Naive thymus-derived CD8-positive, alpha-beta T cell (primary cell): ENCODE measurements at regions of chr2 and their contacts with region 1.

Region 1: DNA sequence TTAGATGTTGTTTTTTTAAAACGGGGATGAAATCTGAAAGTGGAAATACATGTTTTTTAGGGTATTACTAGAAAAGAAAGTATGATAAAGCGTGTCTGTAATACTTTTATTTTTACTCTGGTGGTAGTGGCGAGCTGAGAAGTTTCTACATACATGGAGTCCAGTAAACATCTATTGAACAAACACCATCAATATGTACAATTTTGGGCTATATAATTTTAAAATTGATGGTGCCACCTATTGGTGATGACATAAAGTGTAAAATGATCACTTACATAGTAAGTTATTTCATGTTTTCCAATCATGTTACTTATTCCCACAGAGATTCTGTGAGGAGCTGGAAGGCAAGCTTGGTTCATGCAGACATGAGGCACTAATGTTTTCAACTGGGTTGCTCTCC is 31.5 kb upstream of the NFE2L2 start:
- DNase-seq: peak in 3 of 10 donors; percentile 35 to 44 (median 44)
- ATAC-seq: peak; percentile 69 to 77
- H3K4me3 Mint-ChIP-seq: no peak overlapping the region
- H3K27ac Mint-ChIP-seq: peak overlapping the region in 3 of 10 donors; percentile 4 to 33 (median 14)
- H3K4me1 Mint-ChIP-seq: peaks cover 5 to 15% (median 10%) of the 10 kb centered on the region in 4 donors
- H3K27me3 Mint-ChIP-seq: no peaks in the 10 kb centered on the region

Region 2: DNA sequence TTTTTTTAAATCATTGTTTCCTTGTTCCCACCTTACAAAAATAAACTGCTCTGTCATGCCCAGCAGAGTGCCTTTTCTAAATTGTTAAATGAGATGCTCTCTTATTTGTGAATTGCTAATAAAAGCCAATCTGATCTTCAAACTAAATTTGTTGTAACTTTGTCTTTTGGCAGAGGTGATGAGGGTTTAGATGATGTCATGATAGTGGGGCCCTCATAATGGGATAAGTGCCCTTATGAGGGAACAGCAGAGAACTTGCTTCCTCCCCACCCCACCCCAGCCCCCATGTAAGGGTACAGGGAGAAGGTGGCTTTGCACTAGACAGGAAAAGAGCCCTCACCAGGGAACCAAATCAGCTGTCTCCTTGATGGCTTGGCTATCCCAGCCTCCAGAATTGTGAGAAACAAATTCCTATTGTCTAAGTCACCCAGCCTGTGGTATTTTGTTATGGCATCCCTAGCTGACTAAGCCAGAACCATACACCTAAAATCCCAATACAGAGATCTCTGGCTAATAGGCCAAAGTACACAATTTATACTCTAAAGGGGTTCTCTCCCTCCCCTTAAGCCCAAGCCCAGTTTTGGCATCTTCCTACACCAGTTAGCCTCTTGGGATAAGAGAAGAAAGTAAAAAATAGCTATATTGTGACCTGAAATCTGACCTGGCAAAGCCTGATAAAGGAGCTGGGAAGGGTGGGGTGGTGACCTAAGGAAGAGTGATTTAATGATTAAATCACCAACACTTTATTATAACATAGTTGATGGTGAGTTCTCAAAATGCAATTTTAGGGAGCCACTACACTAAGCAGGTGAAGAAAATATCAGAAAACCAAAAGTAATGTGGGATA is 123.8 kb before region 1 on chr2:
- POLR2A ChIA-PET with region 1: no interaction called
- DNase-seq: no peak
- ATAC-seq: no peak
- H3K4me3 Mint-ChIP-seq: no peak overlapping the region
- H3K27ac Mint-ChIP-seq: no peak overlapping the region
- H3K4me1 Mint-ChIP-seq: peaks cover 0 to 7% (median 3%) of the 10 kb centered on the region in 4 donors
- H3K27me3 Mint-ChIP-seq: peaks cover 0 to 5% (median 3%) of the 10 kb centered on the region in 5 donors

Region 3: GRCh38 chr2:177187631-177188312 is 108.3 kb before region 1 on chr2:
- POLR2A ChIA-PET with region 1: no interaction called
- DNase-seq: no peak
- ATAC-seq: no peak
- H3K4me3 Mint-ChIP-seq: no peak overlapping the region
- H3K27ac Mint-ChIP-seq: no peak overlapping the region
- H3K4me1 Mint-ChIP-seq: peaks cover 0 to 2% (median 0%) of the 10 kb centered on the region in 4 donors
- H3K27me3 Mint-ChIP-seq: peaks cover 0 to 3% (median 0%) of the 10 kb centered on the region in 5 donors

Region 4: DNA sequence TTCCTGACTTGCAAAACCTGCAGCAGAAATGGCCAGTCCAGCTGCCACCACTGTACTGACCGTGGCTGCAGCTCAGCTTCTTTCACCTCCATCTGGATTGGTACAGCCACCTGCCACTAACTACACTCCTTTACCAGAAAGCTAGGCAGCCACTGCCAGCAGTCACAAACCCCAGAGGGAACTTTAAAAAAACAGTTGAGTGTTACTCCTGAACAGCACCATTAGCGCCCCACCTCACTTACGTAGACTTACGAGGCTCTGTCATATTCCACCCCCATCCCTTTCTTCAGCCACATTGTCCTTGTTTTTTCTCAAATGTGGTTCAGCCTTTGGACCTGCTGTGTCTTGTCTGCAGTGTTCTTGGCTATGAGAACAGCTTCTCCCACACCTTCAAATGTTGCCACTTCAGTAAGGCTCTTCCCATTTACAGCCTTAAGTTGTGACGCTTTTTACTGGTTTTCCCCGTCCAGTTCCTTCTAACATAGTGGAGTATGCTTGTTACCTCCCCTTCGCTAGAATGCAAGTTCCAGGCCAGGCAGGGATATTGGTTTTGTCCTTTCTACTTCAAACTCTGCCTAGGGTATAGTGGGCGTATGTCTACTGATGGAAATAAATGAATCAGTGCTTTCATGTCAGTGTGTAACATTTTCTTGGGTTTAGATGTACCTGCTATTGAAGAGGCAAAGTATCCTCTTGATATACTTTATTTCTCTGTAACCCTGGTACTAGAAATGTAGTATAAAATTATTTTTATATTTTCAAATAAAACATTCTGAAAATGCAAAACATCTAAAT is 66.4 kb before region 1 on chr2:
- POLR2A ChIA-PET with region 1: no interaction called
- DNase-seq: no peak
- ATAC-seq: peak in 1 of 2 donors; percentile 10
- H3K4me3 Mint-ChIP-seq: peak overlapping the region in 1 of 10 donors; percentile 43
- H3K27ac Mint-ChIP-seq: peak overlapping the region; percentile 39 to 85 (median 71)
- H3K4me1 Mint-ChIP-seq: peaks cover 26 to 51% (median 40%) of the 10 kb centered on the region in 4 donors
- H3K27me3 Mint-ChIP-seq: no peaks in the 10 kb centered on the region

Region 5: DNA sequence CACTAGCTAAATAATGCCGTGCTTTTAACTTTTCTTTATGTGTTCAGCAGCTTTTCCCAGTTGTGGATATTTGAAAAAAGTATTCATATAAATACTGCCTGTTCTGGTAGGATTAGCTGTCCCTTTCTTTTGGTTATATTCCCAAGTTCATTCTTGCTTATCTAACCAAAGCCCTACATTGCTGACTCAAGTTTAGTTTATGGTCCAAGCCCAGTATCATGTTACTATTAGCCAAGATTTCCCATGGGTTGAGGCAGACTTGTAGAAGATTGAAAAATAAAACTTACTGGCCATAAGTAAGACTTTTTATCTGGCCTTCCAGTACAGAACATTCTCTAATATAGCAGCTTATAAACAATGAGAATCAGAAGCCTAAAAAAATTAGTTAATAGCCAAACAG is 18.2 kb after region 1 on chr2:
- POLR2A ChIA-PET with region 1: interaction called, 16 read pairs
- DNase-seq: no peak
- ATAC-seq: no peak
- H3K4me3 Mint-ChIP-seq: no peak overlapping the region
- H3K27ac Mint-ChIP-seq: peak overlapping the region in 5 of 10 donors; percentile 29 to 85 (median 65)
- H3K4me1 Mint-ChIP-seq: peaks cover 13 to 35% (median 26%) of the 10 kb centered on the region in 4 donors
- H3K27me3 Mint-ChIP-seq: no peaks in the 10 kb centered on the region